ENCODE measurements at regions of chr1 and their contacts with region 1.

Region 1: GRCh38 chr1:246919902-246920301 is 11.8 kb downstream of the AHCTF1 start:
- DNase-seq: no peak
- H3K4me3 ChIP-seq: no peak overlapping the region
- H3K27ac ChIP-seq: no peak overlapping the region
- H3K4me1 ChIP-seq: peaks cover 6% of the 10 kb centered on the region
- H3K27me3 ChIP-seq: no peaks in the 10 kb centered on the region
- CTCF ChIP-seq: no peak
- EP300 ChIP-seq: no peak
- POLR2A ChIP-seq: no peak

Region 2: GRCh38 chr1:246959944-246960693 is 40.2 kb after region 1 on chr1:
- intact Hi-C with region 1: loop called in 1 of 4 experiments (anchors 5 kb)
- DNase-seq: no peak
- H3K4me3 ChIP-seq: no peak overlapping the region
- H3K27ac ChIP-seq: no peak overlapping the region
- H3K4me1 ChIP-seq: no peaks in the 10 kb centered on the region
- H3K27me3 ChIP-seq: no peaks in the 10 kb centered on the region
- CTCF ChIP-seq: peak in 2 of 3 donors; percentile 28 to 30
- EP300 ChIP-seq: no peak
- POLR2A ChIP-seq: no peak

Region 3: DNA sequence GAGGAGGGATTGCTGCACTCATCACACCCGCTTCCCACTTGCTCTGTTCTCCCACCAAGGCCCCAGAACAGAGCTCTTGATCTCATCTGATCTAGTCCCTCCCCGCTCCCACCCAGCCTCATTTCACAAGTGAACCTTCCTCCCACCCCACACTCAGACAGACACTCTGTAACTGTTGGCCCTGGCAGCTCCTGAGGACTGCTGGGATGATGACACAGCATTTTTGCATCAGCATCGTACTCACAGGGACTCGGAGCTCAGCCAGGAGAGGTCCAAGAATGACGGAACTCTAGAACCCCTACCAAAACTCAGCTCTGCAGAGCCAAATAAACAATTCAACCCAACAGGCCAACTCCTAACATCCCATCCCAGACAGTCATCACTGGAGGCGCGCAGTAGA is 263.1 kb after region 1 on chr1:
- intact Hi-C with region 1: no loop called
- DNase-seq: no peak
- H3K4me3 ChIP-seq: no peak overlapping the region
- H3K27ac ChIP-seq: no peak overlapping the region
- H3K4me1 ChIP-seq: no peaks in the 10 kb centered on the region
- H3K27me3 ChIP-seq: no peaks in the 10 kb centered on the region
- CTCF ChIP-seq: no peak
- EP300 ChIP-seq: no peak
- POLR2A ChIP-seq: no peak

Measured in ovary (tissue), 10 donors.